ENCODE measurements at regions of chr1 and their contacts with region 1.

Region 1: GRCh38 chr1:241716915-241717656 is 65.0 kb downstream of the WDR64 start:
- DNase-seq: no peak
- H3K4me3 Mint-ChIP-seq: no peak overlapping the region
- H3K27ac Mint-ChIP-seq: no peak overlapping the region
- H3K4me1 Mint-ChIP-seq: peaks cover 2% of the 10 kb centered on the region
- H3K27me3 Mint-ChIP-seq: peaks cover 32% of the 10 kb centered on the region

Region 2: DNA sequence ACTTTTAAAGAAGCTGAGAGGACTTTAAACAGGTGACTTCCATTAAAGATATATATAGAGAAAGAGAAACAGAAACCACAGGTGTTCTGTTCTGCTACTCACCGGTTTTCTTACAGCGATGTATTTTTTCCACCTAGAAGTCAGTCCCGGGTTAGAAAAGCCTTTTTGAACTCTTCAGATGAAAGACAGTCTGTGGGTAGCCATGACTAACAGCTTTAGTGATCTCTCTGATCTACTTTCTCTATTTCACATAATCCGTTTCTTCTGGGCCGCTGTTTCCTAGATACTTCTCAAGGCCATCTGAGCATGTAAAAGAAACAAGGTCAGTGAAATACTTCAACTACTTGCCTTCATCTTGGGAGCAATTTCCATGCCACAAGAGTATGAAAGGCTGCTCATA is 39.9 kb before region 1 on chr1:
- intact Hi-C with region 1: loop called (anchors 1 kb)
- DNase-seq: peak; percentile 19
- H3K4me3 Mint-ChIP-seq: no peak overlapping the region
- H3K27ac Mint-ChIP-seq: no peak overlapping the region
- H3K4me1 Mint-ChIP-seq: peaks cover 11% of the 10 kb centered on the region
- H3K27me3 Mint-ChIP-seq: peaks cover 11% of the 10 kb centered on the region